B cell (primary cell): ENCODE measurements at regions of chr1 and their contacts with region 1.

Region 1: DNA sequence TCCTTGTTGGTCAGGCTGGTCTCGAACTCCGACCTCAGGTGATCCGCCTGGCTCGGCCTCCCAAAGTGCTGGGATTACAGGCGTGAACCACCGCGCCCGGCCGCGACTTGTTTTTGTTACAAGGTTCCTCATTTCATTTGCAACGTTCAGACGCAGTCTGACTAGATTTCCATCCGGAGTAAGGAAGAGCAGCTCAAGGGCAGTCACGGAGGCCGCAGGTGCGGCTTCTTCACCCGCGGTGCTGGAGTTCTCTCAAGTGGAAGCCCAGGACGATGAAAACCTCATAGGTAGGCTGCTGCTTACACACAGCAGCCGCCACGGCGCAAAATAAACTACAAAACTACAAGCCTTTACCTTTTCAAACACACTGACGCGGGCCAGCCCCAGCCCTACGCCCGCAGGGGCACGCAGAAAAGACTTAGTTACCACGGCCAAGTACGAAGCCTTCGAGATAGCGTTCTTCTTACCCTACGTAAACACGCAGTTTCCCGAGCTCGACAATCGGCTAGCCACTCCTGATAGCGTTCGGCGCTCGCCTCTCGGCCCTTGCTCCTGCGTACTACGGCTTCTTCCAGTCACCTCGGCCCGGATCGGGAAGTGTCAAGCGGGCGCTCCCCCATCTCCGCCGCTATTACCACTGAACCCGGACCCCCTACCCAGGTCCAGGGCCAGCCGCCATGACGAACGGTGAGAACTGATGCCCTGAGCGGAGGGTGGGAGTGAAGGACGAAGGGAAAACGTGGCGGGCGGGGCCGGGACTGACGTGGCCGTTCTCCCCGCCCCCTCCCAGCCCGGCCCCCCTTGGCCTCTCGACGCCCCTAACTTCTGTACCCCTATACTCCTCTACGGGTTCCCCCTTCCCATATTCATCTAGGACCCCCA is at the start of gene TMEM167B:
- DNase-seq: peak; percentile 93
- ATAC-seq: peak; percentile 89
- H3K4me3 ChIP-seq: peak within 1 kb of the TSS; percentile 88 to 99 (median 93)
- H3K4me3 Mint-ChIP-seq: peak within 1 kb of the TSS; percentile 92
- H3K27ac ChIP-seq: peak within 1 kb of the TSS; percentile 96 to 98
- H3K27ac Mint-ChIP-seq: peak within 1 kb of the TSS; percentile 94
- H3K4me1 ChIP-seq: peaks cover 25 to 28% of the 10 kb centered on the region in 2 donors
- H3K4me1 Mint-ChIP-seq: peaks cover 33% of the 10 kb centered on the region
- H3K27me3 ChIP-seq: no peaks in the 10 kb centered on the region
- H3K27me3 Mint-ChIP-seq: no peaks in the 10 kb centered on the region
- CTCF ChIP-seq: no peak
- total RNA-seq, gene TMEM167B: 40.9 and 44.5 TPM in 2 replicates

Region 2: GRCh38 chr1:108963052-108963686 is 127.3 kb before region 1 on chr1 and contains the start of gene CLCC1:
- CTCF ChIA-PET with region 1: no interaction called
- POLR2A ChIA-PET with region 1: interaction called, 3 read pairs
- intact Hi-C with region 1: loop called (anchors 2 kb)
- DNase-seq: peak; percentile 97
- ATAC-seq: peak; percentile 91
- H3K4me3 ChIP-seq: peak within 1 kb of the TSS; percentile 56 to 94 (median 76)
- H3K4me3 Mint-ChIP-seq: peak within 1 kb of the TSS; percentile 91
- H3K27ac ChIP-seq: peak within 1 kb of the TSS; percentile 86 to 94
- H3K27ac Mint-ChIP-seq: peak within 1 kb of the TSS; percentile 95
- H3K4me1 ChIP-seq: peaks cover 16 to 17% of the 10 kb centered on the region in 2 donors
- H3K4me1 Mint-ChIP-seq: peaks cover 30% of the 10 kb centered on the region
- H3K27me3 ChIP-seq: no peaks in the 10 kb centered on the region
- H3K27me3 Mint-ChIP-seq: no peaks in the 10 kb centered on the region
- CTCF ChIP-seq: no peak
- total RNA-seq, gene CLCC1: 26.9 and 29.5 TPM in 2 replicates

Region 3: GRCh38 chr1:109075531-109076490 is 14.6 kb before region 1 on chr1 and contains the start of gene TAF13:
- CTCF ChIA-PET with region 1: interaction called, 13 read pairs
- POLR2A ChIA-PET with region 1: interaction called, 19 read pairs
- intact Hi-C with region 1: loop called (anchors 1 kb)
- DNase-seq: peak; percentile 95
- ATAC-seq: peak; percentile 99
- H3K4me3 ChIP-seq: peak within 1 kb of the TSS; percentile 63 to 98 (median 92)
- H3K4me3 Mint-ChIP-seq: peak within 1 kb of the TSS; percentile 99
- H3K27ac ChIP-seq: peak within 1 kb of the TSS; percentile 95 to 98
- H3K27ac Mint-ChIP-seq: peak within 1 kb of the TSS; percentile 97
- H3K4me1 ChIP-seq: peaks cover 12 to 13% of the 10 kb centered on the region in 2 donors
- H3K4me1 Mint-ChIP-seq: peaks cover 17% of the 10 kb centered on the region
- H3K27me3 ChIP-seq: no peaks in the 10 kb centered on the region
- H3K27me3 Mint-ChIP-seq: no peaks in the 10 kb centered on the region
- CTCF ChIP-seq: no peak
- total RNA-seq, gene TAF13: 12.9 and 14.3 TPM in 2 replicates